GM10248 (cell line): ENCODE measurements at regions of chr19 and their contacts with region 1.

Region 1: DNA sequence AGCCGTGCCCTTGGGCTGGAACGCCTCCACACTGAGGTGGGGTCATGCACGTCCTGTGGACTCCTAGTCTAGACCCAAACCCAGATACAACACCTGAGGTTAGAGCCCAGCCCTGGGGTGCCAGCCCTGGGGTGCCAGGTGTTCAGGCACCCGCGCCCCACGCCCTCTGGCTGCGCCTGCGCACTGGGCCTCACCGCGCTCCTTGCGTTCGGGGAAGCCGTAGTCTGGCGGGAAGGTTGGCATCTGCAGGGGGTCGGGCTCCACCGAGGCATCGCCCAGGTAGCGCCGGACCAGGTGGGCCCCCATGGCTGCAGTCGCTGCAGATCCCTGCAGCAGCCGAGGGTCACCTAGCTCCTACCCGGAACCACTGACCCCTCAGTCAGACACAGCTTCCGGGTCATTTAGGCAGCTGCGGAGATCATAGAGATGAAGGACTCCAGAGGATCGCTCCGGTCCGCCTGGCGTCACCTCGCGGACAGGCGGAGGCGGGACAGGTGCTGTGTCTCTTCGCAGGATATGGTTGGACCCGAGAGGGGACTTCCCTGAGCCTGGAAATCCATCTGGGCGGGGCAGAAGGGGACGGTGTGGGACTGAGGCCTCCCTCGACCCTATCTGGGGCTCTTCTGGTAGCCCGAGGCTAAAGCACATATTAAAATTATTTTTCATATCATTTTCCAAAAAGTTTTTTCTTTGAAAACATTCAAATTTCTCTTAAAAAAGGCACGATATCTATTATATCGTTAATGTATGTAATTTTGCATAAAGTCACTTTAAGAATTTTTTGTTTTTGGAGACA is at the start of gene NDUFB7:
- DNase-seq: peak; percentile 91
- CTCF ChIP-seq: peak; percentile 93

Region 2: DNA sequence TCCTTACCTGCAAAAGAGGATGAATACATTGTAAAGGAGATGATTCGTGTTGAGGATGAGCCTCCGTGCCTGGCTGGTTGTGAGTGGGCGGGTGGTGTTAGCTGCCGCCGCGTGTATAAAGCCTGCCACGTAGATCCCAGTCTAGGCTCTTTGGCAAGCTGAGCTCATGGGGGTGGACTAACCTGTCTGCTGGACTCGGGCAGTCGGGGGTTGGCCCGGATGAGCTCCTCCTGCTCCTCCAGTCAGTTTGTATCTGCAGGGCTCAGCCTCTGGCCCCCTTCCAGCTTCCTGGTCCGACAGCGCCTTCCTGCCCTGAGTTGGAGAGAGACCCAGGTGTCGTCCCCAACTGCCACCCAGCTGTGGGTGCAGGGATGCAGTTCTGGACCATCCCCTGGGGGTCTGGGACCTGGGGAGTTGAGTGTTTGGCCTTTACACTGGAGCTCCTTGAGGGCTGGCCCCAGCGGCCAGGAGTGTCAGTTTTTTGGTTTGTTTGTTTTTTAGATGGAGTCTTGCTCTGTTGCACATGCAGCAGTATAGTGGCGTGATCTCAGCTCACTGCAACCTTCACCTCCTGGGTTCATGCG is 21.6 kb before region 1 on chr19:
- CTCF ChIA-PET with region 1: interaction called, 53 read pairs
- POLR2A ChIA-PET with region 1: no interaction called
- DNase-seq: no peak
- CTCF ChIP-seq: no peak

Region 3: GRCh38 chr19:14556662-14557188 is 15.2 kb before region 1 on chr19:
- CTCF ChIA-PET with region 1: interaction called, 53 read pairs
- POLR2A ChIA-PET with region 1: no interaction called
- DNase-seq: peak; percentile 91
- CTCF ChIP-seq: peak; percentile 91

Region 4: GRCh38 chr19:14603990-14604387 is 32.1 kb after region 1 on chr19:
- CTCF ChIA-PET with region 1: interaction called, 11 read pairs
- POLR2A ChIA-PET with region 1: no interaction called
- DNase-seq: peak; percentile 77
- CTCF ChIP-seq: no peak

Region 5: GRCh38 chr19:14614099-14614412 is 42.2 kb after region 1 on chr19:
- CTCF ChIA-PET with region 1: interaction called, 40 read pairs
- POLR2A ChIA-PET with region 1: interaction called, 5 read pairs
- DNase-seq: peak; percentile 65
- CTCF ChIP-seq: no peak

Region 6: GRCh38 chr19:14689598-14690503 is 118.0 kb after region 1 on chr19 and contains the start of gene ZNF333:
- CTCF ChIA-PET with region 1: interaction called, 307 read pairs
- POLR2A ChIA-PET with region 1: interaction called, 5 read pairs
- DNase-seq: peak; percentile 97
- CTCF ChIP-seq: no peak